OCI-LY7 (cell line): ENCODE measurements at regions of chr12 and their contacts with region 1.

Region 1: DNA sequence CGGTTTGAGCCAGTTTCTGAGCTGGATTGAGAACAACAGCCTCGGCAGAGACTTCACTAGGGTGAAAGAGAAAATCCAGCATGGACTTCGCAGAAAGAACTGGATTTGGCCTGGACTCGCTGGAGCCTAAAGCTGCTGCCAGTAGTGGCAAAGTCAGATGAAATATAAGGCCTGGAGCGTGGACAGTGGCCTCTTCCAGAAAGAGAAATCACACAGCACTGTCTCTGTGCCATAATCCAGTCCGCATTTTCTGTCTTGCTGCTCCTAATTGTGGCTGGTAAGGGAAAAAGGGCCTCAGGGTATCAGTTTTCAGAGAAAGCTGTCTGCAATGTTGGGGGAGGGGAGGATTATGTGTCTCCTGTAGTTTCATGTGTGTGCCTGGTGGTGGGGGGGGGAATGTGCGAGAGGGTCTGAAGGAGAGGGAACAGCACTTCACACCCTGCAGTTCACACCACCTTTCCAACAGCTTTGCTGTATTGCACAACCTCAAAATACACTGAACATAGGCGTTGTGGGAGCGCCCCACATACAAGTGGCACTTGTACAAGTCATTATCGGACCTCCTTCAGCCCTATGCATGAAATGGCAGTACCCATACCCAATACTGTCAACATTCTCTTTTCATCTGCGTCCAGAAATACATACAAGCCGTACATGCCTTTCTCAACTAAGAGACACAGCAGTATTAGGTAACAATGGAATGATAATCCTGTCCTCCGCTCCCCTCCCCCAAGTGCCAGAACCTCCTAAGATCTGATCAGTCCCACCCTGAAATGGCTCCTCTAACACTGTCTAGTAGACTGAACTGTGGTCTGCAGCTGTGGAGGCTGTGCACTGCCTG is 107.5 kb upstream of the ATF7IP start:
- DNase-seq: peak; percentile 99
- H3K4me3 ChIP-seq: peak overlapping the region; percentile 56
- H3K27ac ChIP-seq: peak overlapping the region; percentile 98
- H3K4me1 ChIP-seq: peaks cover 76% of the 10 kb centered on the region
- CTCF ChIP-seq: peak; percentile 23; the same call in 1 of the 2 replicates

Region 2: GRCh38 chr12:14272956-14273907 is 15.3 kb after region 1 on chr12:
- CTCF ChIA-PET with region 1: interaction called, 11 read pairs
- POLR2A ChIA-PET with region 1: interaction called, 69 read pairs
- intact Hi-C with region 1: no loop called
- DNase-seq: peak; percentile 50
- H3K4me3 ChIP-seq: peak overlapping the region; percentile 16
- H3K27ac ChIP-seq: peak overlapping the region; percentile 51
- H3K4me1 ChIP-seq: peaks cover 49% of the 10 kb centered on the region
- CTCF ChIP-seq: no peak

Region 3: GRCh38 chr12:14284184-14284722 is 26.3 kb after region 1 on chr12:
- CTCF ChIA-PET with region 1: interaction called, 5 read pairs
- POLR2A ChIA-PET with region 1: interaction called, 69 read pairs
- intact Hi-C with region 1: loop called (anchors 1 kb)
- DNase-seq: peak; percentile 71
- H3K4me3 ChIP-seq: peak overlapping the region; percentile 60
- H3K27ac ChIP-seq: peak overlapping the region; percentile 95
- H3K4me1 ChIP-seq: peaks cover 58% of the 10 kb centered on the region
- CTCF ChIP-seq: peak; percentile 53

Region 4: DNA sequence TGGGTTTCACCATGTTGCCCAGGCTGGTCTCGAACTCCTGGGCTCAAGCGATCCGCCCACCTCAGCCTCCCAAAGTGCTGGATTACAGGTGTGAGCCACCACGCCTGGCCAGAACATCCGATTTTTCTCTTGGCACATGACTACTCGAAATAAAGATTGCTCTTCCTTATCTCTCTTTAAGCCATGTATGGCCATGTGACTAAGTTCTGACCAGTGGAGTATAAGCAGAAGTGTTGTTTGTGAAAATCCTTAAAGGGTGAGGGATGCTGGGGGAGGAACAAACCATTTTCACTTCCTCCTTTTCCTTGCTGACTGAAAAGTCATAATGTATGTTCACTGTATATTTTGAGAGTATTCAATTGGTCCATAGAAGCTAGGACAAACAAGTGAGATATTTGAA is 56.8 kb after region 1 on chr12:
- CTCF ChIA-PET with region 1: no interaction called
- POLR2A ChIA-PET with region 1: interaction called, 3 read pairs
- intact Hi-C with region 1: loop called (anchors 5 kb)
- DNase-seq: peak; percentile 74
- H3K4me3 ChIP-seq: no peak overlapping the region
- H3K27ac ChIP-seq: peak overlapping the region; percentile 38
- H3K4me1 ChIP-seq: peaks cover 33% of the 10 kb centered on the region
- CTCF ChIP-seq: 0 out of 2 replicates have a peak, but pooled peaks have one; percentile 25

Region 5: GRCh38 chr12:14365294-14366208 is 107.6 kb after region 1 on chr12 and contains the start of gene ATF7IP:
- CTCF ChIA-PET with region 1: no interaction called
- POLR2A ChIA-PET with region 1: interaction called, 4 read pairs
- intact Hi-C with region 1: loop called (anchors 1 kb)
- DNase-seq: peak; percentile 68
- H3K4me3 ChIP-seq: peak within 1 kb of the TSS; percentile 22
- H3K27ac ChIP-seq: peak within 1 kb of the TSS; percentile 51
- H3K4me1 ChIP-seq: peaks cover 36% of the 10 kb centered on the region
- CTCF ChIP-seq: peak; percentile 75
- total RNA-seq, gene ATF7IP: 55.6 and 69.8 TPM in 2 replicates

Region 6: DNA sequence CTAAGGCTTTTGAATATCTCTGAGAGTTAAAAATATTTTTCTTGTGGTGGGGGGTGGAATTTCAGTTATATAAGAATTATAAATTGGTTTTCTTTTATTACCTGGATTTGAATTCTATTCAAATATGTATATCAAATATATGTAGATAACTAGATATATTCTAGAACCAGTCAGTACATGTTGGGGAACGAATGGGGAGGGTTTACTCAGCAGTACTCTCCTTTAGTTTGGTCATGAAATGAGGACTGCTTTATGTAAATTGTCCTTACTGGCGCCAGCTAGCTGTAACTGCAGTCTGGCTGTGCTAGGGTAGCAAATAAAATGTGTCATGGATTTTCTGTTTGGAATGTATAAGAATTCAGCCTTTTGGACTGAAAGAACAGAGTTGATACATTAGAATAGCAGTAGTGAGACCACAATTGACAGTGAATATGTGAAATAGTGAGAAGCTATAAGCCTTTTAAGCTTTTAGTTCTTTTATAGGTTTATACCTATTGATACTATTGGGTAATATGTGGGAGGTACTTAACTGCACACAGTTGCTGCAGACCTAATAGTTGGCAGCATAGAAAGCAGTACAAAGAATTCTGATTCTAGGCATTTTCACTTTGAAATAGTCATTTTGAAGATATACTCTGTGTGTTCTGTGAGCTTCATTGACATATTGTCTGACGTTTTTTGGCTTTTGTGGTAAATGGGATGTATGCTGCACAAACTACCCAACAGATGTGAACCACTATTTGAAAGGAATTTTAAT is 136.5 kb after region 1 on chr12:
- CTCF ChIA-PET with region 1: interaction called, 4 read pairs
- POLR2A ChIA-PET with region 1: interaction called, 4 read pairs
- intact Hi-C with region 1: loop called (anchors 1 kb)
- DNase-seq: peak; percentile 90
- H3K4me3 ChIP-seq: peak overlapping the region; percentile 51
- H3K27ac ChIP-seq: peak overlapping the region; percentile 91
- H3K4me1 ChIP-seq: peaks cover 78% of the 10 kb centered on the region
- CTCF ChIP-seq: peak; percentile 38

Region 7: GRCh38 chr12:14454098-14454907 is 196.3 kb after region 1 on chr12:
- CTCF ChIA-PET with region 1: no interaction called
- POLR2A ChIA-PET with region 1: interaction called, 3 read pairs
- intact Hi-C with region 1: loop called (anchors 1 kb)
- DNase-seq: peak; percentile 83
- H3K4me3 ChIP-seq: no peak overlapping the region
- H3K27ac ChIP-seq: no peak overlapping the region
- H3K4me1 ChIP-seq: peaks cover 10% of the 10 kb centered on the region
- CTCF ChIP-seq: peak; percentile 97

Region 8: DNA sequence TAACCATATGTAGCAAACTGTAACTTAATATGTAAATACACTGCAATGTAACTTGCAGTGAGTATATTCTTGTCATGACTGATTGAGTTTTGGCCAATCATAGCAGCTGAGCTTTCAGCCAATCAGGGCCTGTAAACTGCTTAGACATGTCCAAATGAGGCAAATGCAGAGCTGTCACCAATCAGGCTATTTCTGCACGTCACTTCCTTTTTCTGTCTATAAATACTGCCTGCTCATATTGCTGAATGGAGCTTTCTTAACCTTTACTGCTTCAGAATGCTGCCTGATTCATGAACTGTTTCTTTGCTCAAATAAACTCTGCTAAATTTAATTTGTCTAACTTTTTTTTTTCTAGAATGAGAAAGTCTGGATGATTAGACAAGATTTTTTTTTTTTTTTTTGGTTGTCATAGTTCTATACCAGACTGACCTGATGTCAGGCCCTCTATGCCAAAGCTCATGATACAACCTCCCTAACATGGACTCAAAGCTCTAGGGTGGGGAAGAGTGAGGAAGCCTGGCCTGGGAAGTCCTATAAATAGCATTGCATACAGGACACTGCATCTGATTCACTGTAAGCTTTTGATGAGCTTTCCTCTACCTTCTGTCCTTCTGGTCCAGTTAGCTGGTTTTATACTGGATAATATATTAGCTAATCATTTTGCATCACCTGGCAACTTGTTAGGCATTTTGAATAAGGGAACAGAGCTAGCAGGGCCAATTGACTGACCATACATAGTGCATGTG is 615.7 kb after region 1 on chr12:
- CTCF ChIA-PET with region 1: no interaction called
- POLR2A ChIA-PET with region 1: no interaction called
- intact Hi-C with region 1: no loop called
- DNase-seq: peak; percentile 48
- H3K4me3 ChIP-seq: no peak overlapping the region
- H3K27ac ChIP-seq: no peak overlapping the region
- H3K4me1 ChIP-seq: peaks cover 17% of the 10 kb centered on the region
- CTCF ChIP-seq: no peak